GM12878 (cell line): ENCODE measurements at regions of chr3 and their contacts with region 1.

Region 1: GRCh38 chr3:106176734-106177133 is 307.9 kb upstream of the CBLB start:
- DNase-seq: peak; percentile 88
- ATAC-seq: peak; percentile 91
- H3K4me3 ChIP-seq: 0 out of 2 replicates have a peak overlapping the region, but pooled peaks have one; percentile 11
- H3K27ac ChIP-seq: peak overlapping the region; percentile 75
- H3K4me1 ChIP-seq: peaks cover 39% of the 10 kb centered on the region
- H3K27me3 ChIP-seq: no peaks in the 10 kb centered on the region
- CTCF ChIP-seq: no peak
- EP300 ChIP-seq: peak; percentile 5 to 67; a peak in 1 of 4 replicates
- POLR2A ChIP-seq: no peak
- RAD21 ChIP-seq: peak; percentile 37; the same call in 1 of the 2 replicates

Region 2: DNA sequence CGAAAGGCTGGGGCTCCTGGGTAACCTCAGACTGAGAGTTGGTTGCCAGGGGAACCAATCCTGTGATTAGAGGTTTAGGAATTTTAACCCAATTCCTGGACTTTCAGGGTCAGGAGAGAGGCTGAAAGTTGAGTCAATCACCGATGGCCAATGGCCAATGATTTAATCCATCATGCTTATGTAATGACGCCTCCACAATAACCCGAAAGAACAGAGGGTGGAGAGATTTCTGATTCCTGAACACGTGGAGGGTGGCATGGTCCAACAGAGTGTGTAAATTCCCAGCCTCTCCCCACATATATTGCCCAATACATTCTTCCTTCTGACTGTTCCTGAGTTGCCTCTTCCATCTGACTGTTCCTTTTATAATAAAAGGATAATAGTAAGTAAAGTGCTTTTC is 170.7 kb before region 1 on chr3:
- CTCF ChIA-PET with region 1: no interaction called
- POLR2A ChIA-PET with region 1: no interaction called
- RAD21 ChIA-PET with region 1: no interaction called
- SMC1A ChIA-PET with region 1: no interaction called
- in situ Hi-C with region 1: no loop called
- intact Hi-C with region 1: no loop called
- DNase-seq: no peak
- ATAC-seq: no peak
- H3K4me3 ChIP-seq: no peak overlapping the region
- H3K27ac ChIP-seq: no peak overlapping the region
- H3K4me1 ChIP-seq: no peaks in the 10 kb centered on the region
- H3K27me3 ChIP-seq: no peaks in the 10 kb centered on the region
- CTCF ChIP-seq: no peak
- EP300 ChIP-seq: no peak
- POLR2A ChIP-seq: no peak
- RAD21 ChIP-seq: no peak

Region 3: DNA sequence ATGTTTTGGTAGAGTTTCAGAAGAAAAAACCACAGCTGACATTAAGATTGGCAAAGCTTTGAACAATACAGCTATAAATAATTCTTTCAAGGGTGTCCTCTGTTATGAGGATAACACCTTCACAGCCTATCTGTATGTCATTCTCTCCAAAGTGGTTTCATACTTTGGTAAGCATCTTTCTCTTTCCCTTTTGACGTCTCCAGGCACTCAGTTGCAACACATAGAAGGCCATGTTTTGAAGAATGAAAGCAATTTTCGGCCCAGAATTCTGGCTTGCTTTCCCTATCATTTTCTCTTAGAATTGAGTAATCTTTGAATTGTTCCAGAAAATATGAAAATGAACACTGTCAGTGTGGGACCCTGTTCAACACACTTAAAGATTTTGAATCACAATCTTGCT is 107.9 kb before region 1 on chr3:
- CTCF ChIA-PET with region 1: interaction called, 3 read pairs
- POLR2A ChIA-PET with region 1: no interaction called
- RAD21 ChIA-PET with region 1: interaction called, 12 read pairs
- SMC1A ChIA-PET with region 1: interaction called, 5 read pairs
- in situ Hi-C with region 1: no loop called
- intact Hi-C with region 1: loop called (anchors 5 kb)
- DNase-seq: no peak
- ATAC-seq: peak; percentile 91
- H3K4me3 ChIP-seq: no peak overlapping the region
- H3K27ac ChIP-seq: peak overlapping the region; percentile 20; the same call in 1 of the 2 replicates
- H3K4me1 ChIP-seq: no peaks in the 10 kb centered on the region
- H3K27me3 ChIP-seq: no peaks in the 10 kb centered on the region
- CTCF ChIP-seq: no peak
- EP300 ChIP-seq: no peak; a peak in 1 of 4 replicates
- POLR2A ChIP-seq: no peak
- RAD21 ChIP-seq: no peak

Region 4: GRCh38 chr3:106140431-106140830 is 36.3 kb before region 1 on chr3:
- CTCF ChIA-PET with region 1: no interaction called
- POLR2A ChIA-PET with region 1: no interaction called
- RAD21 ChIA-PET with region 1: no interaction called
- SMC1A ChIA-PET with region 1: no interaction called
- in situ Hi-C with region 1: no loop called
- intact Hi-C with region 1: no loop called
- DNase-seq: no peak
- ATAC-seq: no peak
- H3K4me3 ChIP-seq: no peak overlapping the region
- H3K27ac ChIP-seq: no peak overlapping the region
- H3K4me1 ChIP-seq: no peaks in the 10 kb centered on the region
- H3K27me3 ChIP-seq: no peaks in the 10 kb centered on the region
- CTCF ChIP-seq: no peak
- EP300 ChIP-seq: no peak
- POLR2A ChIP-seq: no peak
- RAD21 ChIP-seq: no peak

Region 5: DNA sequence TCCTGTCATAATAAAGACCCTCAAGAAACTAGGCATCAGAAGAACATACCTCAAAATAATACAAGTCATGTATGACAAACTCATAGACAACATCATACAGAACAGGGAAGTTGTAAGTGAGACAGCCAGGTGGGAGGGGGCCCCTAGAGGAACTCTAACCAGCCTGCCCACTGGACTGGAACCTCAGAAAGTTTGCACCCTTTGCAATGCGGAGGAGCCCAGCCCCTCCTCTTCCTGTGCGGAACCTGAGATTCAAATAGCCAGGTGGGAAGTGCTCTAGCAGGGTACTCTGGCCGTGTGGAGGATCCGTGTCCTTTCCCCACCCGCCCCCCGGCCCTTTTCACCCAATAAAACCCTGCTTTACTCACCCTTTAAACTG is 79.1 kb after region 1 on chr3:
- CTCF ChIA-PET with region 1: interaction called, 3 read pairs
- POLR2A ChIA-PET with region 1: interaction called, 4 read pairs
- RAD21 ChIA-PET with region 1: interaction called, 96 read pairs
- SMC1A ChIA-PET with region 1: interaction called, 23 read pairs
- in situ Hi-C with region 1: no loop called
- intact Hi-C with region 1: no loop called
- DNase-seq: peak; percentile 93
- ATAC-seq: peak; percentile 88
- H3K4me3 ChIP-seq: peak overlapping the region; percentile 83
- H3K27ac ChIP-seq: peak overlapping the region; percentile 99
- H3K4me1 ChIP-seq: no peaks in the 10 kb centered on the region
- H3K27me3 ChIP-seq: no peaks in the 10 kb centered on the region
- CTCF ChIP-seq: no peak
- EP300 ChIP-seq: peak in 1 of 2 experiments; percentile 82; a peak in 2 of 4 replicates
- POLR2A ChIP-seq: peak; percentile 71
- RAD21 ChIP-seq: peak; percentile 7; the same call in 1 of the 2 replicates